ENCODE measurements at regions of chr16 and their contacts with region 1.

Region 1: DNA sequence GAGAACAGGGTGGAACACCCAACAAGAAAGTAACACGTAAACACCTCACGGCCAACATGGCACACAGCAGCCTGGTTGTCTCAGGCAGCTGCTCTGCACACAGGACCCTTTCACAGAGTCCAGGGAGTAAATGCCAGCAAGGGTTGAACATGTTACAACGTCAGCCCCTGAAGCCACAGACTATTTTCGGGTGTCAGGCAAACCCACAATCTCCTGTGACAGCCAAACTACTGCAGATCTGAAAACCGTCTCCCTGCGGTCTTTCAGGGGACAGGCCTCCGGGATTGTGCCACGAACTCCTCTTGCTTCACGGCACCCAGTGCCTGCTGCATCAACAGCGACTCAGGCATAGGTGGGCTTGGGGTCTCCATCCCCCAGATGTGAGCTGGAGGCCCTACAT is 127.7 kb downstream of the XYLT1 start:
- DNase-seq: peak; percentile 69
- ATAC-seq: peak; percentile 63
- H3K4me3 ChIP-seq: peak overlapping the region in 2 of 5 experiments; percentile 14 to 17
- H3K4me3 Mint-ChIP-seq: peak overlapping the region; percentile 66
- H3K27ac ChIP-seq: peak overlapping the region; percentile 62 to 72
- H3K27ac Mint-ChIP-seq: peak overlapping the region; percentile 87
- H3K4me1 ChIP-seq: peaks cover 73 to 80% of the 10 kb centered on the region in 2 donors
- H3K4me1 Mint-ChIP-seq: peaks cover 68% of the 10 kb centered on the region
- H3K27me3 ChIP-seq: no peaks in the 10 kb centered on the region
- H3K27me3 Mint-ChIP-seq: no peaks in the 10 kb centered on the region
- CTCF ChIP-seq: no peak

Region 2: DNA sequence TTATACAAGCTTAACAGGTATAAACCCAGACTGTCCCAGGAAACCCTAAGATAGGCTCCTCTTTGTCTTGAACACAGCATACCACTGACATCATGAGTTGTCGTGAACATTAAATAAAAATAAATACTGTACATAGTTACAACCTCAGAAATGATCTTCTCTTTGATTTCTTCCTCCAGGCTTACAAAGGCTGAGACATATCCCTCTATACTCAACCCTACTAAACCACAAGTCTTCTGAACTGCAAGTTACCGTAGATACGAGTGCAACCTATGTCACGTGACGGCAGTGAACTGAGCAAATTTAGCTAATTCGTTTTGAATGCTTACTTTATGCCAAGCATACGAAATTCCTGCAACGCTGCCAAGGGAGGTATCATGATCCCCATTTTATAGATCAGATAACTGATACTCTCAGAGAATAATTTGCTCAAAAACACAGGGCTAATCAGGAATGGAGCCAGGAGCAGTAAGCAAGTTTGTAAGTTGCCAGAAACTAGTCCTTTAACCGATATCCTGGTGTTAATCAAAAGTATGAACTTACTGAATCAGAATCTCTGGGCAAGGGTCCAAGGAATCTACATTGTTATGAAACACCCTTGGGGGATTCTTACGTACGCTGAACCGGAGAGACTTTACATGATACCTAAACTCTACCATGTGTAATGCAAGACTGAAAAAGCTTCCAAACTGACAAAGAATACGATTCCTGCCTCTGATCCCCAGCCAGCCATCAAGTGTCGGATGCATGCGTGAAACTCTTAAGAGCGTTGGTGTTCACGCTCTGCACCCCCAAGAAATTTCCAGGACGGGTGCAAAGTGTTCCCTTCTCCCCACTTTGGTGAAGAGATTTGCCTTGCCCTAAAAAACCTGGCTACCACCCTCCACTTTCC is 21.5 kb after region 1 on chr16:
- CTCF ChIA-PET with region 1: interaction called, 11 read pairs
- POLR2A ChIA-PET with region 1: interaction called, 8 read pairs
- intact Hi-C with region 1: loop called (anchors 2 kb)
- DNase-seq: peak; percentile 58
- ATAC-seq: no peak
- H3K4me3 ChIP-seq: no peak overlapping the region
- H3K4me3 Mint-ChIP-seq: peak overlapping the region; percentile 40
- H3K27ac ChIP-seq: peak overlapping the region; percentile 18 to 93
- H3K27ac Mint-ChIP-seq: peak overlapping the region; percentile 23
- H3K4me1 ChIP-seq: peaks cover 99 to 100% of the 10 kb centered on the region in 2 donors
- H3K4me1 Mint-ChIP-seq: peaks cover 93% of the 10 kb centered on the region
- H3K27me3 ChIP-seq: no peaks in the 10 kb centered on the region
- H3K27me3 Mint-ChIP-seq: no peaks in the 10 kb centered on the region
- CTCF ChIP-seq: no peak

Measured in B cell (primary cell).